ENCODE measurements at regions of chr6 and their contacts with region 1.

Region 1: GRCh38 chr6:158213925-158214674 is 46.0 kb downstream of the GTF2H5 start:
- DNase-seq: peak in 30 of 35 experiments; percentile 14 to 79 (median 37)
- ATAC-seq: peak; percentile 93 to 100 (median 99)
- H3K4me3 ChIP-seq: no peak overlapping the region
- H3K4me3 Mint-ChIP-seq: no peak overlapping the region
- H3K27ac ChIP-seq: no peak overlapping the region
- H3K27ac Mint-ChIP-seq: no peak overlapping the region
- H3K4me1 ChIP-seq: peaks cover 0 to 3% of the 10 kb centered on the region in 2 experiments
- H3K4me1 Mint-ChIP-seq: peaks cover under 1 to 8% (median 3%) of the 10 kb centered on the region in 3 donors
- H3K27me3 ChIP-seq: no peaks in the 10 kb centered on the region
- H3K27me3 Mint-ChIP-seq: no peaks in the 10 kb centered on the region

Region 2: DNA sequence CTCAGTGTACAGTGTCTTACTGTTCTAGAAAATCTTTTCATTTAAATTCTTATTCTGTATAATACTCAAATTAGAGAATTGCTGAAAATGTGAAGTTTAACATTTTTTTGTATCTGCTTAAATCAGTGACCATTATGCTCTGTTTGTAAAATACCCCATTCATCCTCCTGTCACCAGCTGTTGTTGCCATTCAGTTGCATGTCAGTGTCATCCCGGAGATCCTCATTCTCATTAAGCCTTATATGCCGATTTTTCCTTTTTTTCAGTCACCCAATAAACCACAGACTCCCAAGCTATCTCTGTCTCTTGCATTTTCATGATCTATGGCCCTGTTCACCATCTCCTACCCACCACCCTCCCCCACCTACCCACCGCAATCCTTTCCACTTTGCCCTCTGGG is 25.5 kb before region 1 on chr6:
- CTCF ChIA-PET with region 1: no interaction called
- POLR2A ChIA-PET with region 1: no interaction called
- DNase-seq: no peak
- ATAC-seq: no peak
- H3K4me3 ChIP-seq: no peak overlapping the region
- H3K4me3 Mint-ChIP-seq: no peak overlapping the region
- H3K27ac ChIP-seq: no peak overlapping the region
- H3K27ac Mint-ChIP-seq: no peak overlapping the region
- H3K4me1 ChIP-seq: peaks cover 0 to 2% of the 10 kb centered on the region in 2 experiments
- H3K4me1 Mint-ChIP-seq: peaks cover 6 to 7% (median 6%) of the 10 kb centered on the region in 3 donors
- H3K27me3 ChIP-seq: no peaks in the 10 kb centered on the region
- H3K27me3 Mint-ChIP-seq: no peaks in the 10 kb centered on the region

Region 3: GRCh38 chr6:158255275-158255988 is 41.3 kb after region 1 on chr6:
- CTCF ChIA-PET with region 1: no interaction called
- POLR2A ChIA-PET with region 1: no interaction called
- DNase-seq: no peak
- ATAC-seq: no peak
- H3K4me3 ChIP-seq: no peak overlapping the region
- H3K4me3 Mint-ChIP-seq: peak overlapping the region in 1 of 3 donors; percentile 52
- H3K27ac ChIP-seq: no peak overlapping the region
- H3K27ac Mint-ChIP-seq: peak overlapping the region; percentile 85 to 88
- H3K4me1 ChIP-seq: peaks cover 15 to 24% of the 10 kb centered on the region in 2 experiments
- H3K4me1 Mint-ChIP-seq: peaks cover 49 to 61% (median 60%) of the 10 kb centered on the region in 3 donors
- H3K27me3 ChIP-seq: no peaks in the 10 kb centered on the region
- H3K27me3 Mint-ChIP-seq: no peaks in the 10 kb centered on the region

Region 4: DNA sequence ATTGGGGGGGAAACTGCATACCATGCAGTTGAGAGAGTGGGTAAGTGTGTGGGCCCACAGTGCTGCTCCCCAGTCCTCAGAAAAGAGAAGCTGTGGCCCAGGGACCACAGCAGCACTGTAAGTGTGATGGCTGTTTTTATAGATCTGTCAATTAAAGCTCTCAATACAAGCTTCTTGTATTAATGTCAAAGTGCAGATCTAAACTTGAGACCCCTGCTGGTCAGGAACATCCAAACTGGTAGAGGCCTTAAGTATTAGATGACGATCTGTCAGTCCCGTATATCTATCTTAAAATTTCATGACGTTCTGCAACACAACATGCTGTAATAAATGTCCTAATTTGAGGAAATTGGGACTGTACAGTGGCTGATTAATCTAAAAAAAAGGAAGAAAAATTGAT is 172.9 kb after region 1 on chr6:
- CTCF ChIA-PET with region 1: interaction called in 1 of 2 experiments, 14 read pairs
- POLR2A ChIA-PET with region 1: interaction called in 1 of 2 experiments, 4 read pairs
- DNase-seq: peak in 7 of 35 experiments; percentile 2 to 46 (median 9)
- ATAC-seq: no peak
- H3K4me3 ChIP-seq: no peak overlapping the region
- H3K4me3 Mint-ChIP-seq: no peak overlapping the region
- H3K27ac ChIP-seq: no peak overlapping the region
- H3K27ac Mint-ChIP-seq: no peak overlapping the region
- H3K4me1 ChIP-seq: no peaks in the 10 kb centered on the region
- H3K4me1 Mint-ChIP-seq: peaks cover 13 to 21% (median 15%) of the 10 kb centered on the region in 3 donors
- H3K27me3 ChIP-seq: no peaks in the 10 kb centered on the region
- H3K27me3 Mint-ChIP-seq: no peaks in the 10 kb centered on the region

Region 5: GRCh38 chr6:158595223-158595622 is 381.1 kb after region 1 on chr6:
- CTCF ChIA-PET with region 1: interaction called, 3 to 10 read pairs
- POLR2A ChIA-PET with region 1: no interaction called
- DNase-seq: peak in 15 of 35 experiments; percentile 6 to 44 (median 14)
- ATAC-seq: peak in 3 of 4 experiments; percentile 53 to 59 (median 54)
- H3K4me3 ChIP-seq: no peak overlapping the region
- H3K4me3 Mint-ChIP-seq: no peak overlapping the region
- H3K27ac ChIP-seq: no peak overlapping the region
- H3K27ac Mint-ChIP-seq: no peak overlapping the region
- H3K4me1 ChIP-seq: no peaks in the 10 kb centered on the region
- H3K4me1 Mint-ChIP-seq: peaks cover 0 to 10% (median 5%) of the 10 kb centered on the region in 3 donors
- H3K27me3 ChIP-seq: no peaks in the 10 kb centered on the region
- H3K27me3 Mint-ChIP-seq: no peaks in the 10 kb centered on the region

Region 6: DNA sequence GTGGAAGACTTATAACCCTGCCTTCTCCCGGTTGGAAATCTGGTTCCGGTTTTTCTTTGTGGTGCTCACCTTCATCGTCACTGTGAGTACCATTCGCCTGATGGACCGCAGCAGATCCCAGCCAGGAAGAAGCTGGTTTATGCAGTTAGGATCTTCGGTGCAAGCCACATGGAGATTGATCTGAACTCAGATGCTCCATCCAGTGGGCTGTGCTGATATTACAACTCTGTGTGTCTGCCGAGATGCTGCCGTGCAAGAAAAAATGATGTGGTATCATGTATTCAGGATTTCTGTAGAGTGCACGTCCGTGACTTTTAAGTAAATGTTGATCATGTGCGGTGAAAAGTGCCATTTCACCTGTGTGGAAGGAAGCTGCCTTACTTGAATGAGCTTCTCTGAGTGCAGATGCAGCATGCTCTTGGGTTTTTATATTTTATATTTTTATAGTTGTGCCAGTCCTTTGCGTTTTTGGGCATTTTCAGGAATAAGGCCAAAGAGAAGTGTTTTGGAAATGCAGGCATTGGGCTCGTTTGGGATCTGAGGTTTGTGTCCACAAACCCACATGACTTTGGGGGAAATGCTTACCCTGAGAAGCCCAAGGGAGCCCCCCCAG is 391.3 kb after region 1 on chr6:
- CTCF ChIA-PET with region 1: interaction called, 7 to 10 read pairs
- POLR2A ChIA-PET with region 1: interaction called in 1 of 2 experiments, 4 read pairs
- DNase-seq: peak in 34 of 35 experiments; percentile 6 to 72 (median 44)
- ATAC-seq: peak in 3 of 4 experiments; percentile 53 to 66 (median 57)
- H3K4me3 ChIP-seq: no peak overlapping the region
- H3K4me3 Mint-ChIP-seq: no peak overlapping the region
- H3K27ac ChIP-seq: no peak overlapping the region
- H3K27ac Mint-ChIP-seq: peak overlapping the region; percentile 10 to 73
- H3K4me1 ChIP-seq: no peaks in the 10 kb centered on the region
- H3K4me1 Mint-ChIP-seq: peaks cover 8 to 18% (median 9%) of the 10 kb centered on the region in 3 donors
- H3K27me3 ChIP-seq: no peaks in the 10 kb centered on the region
- H3K27me3 Mint-ChIP-seq: no peaks in the 10 kb centered on the region

Region 7: GRCh38 chr6:158631678-158632537 is 417.8 kb after region 1 on chr6:
- CTCF ChIA-PET with region 1: interaction called in 1 of 2 experiments, 12 read pairs
- POLR2A ChIA-PET with region 1: no interaction called
- DNase-seq: no peak
- ATAC-seq: no peak
- H3K4me3 ChIP-seq: no peak overlapping the region
- H3K4me3 Mint-ChIP-seq: no peak overlapping the region
- H3K27ac ChIP-seq: no peak overlapping the region
- H3K27ac Mint-ChIP-seq: peak overlapping the region; percentile 75 to 84
- H3K4me1 ChIP-seq: peaks cover 19 to 27% of the 10 kb centered on the region in 2 experiments
- H3K4me1 Mint-ChIP-seq: peaks cover 50 to 55% (median 52%) of the 10 kb centered on the region in 3 donors
- H3K27me3 ChIP-seq: no peaks in the 10 kb centered on the region
- H3K27me3 Mint-ChIP-seq: no peaks in the 10 kb centered on the region

Measured in T-cell (primary cell).